ENCODE measurements at regions of chr10 and their contacts with region 1.

Region 1: GRCh38 chr10:103231047-103231551 is 14.6 kb upstream of the RPEL1 start:
- DNase-seq: peak; percentile 48 to 68
- ATAC-seq: peak; percentile 59 to 78
- H3K4me3 ChIP-seq: no peak overlapping the region
- H3K27ac ChIP-seq: peak overlapping the region; percentile 86 to 95 (median 87)
- H3K4me1 ChIP-seq: peaks cover 28 to 42% of the 10 kb centered on the region in 2 donors
- H3K27me3 ChIP-seq: no peaks in the 10 kb centered on the region
- CTCF ChIP-seq: no peak
- POLR2A ChIP-seq: no peak

Region 2: DNA sequence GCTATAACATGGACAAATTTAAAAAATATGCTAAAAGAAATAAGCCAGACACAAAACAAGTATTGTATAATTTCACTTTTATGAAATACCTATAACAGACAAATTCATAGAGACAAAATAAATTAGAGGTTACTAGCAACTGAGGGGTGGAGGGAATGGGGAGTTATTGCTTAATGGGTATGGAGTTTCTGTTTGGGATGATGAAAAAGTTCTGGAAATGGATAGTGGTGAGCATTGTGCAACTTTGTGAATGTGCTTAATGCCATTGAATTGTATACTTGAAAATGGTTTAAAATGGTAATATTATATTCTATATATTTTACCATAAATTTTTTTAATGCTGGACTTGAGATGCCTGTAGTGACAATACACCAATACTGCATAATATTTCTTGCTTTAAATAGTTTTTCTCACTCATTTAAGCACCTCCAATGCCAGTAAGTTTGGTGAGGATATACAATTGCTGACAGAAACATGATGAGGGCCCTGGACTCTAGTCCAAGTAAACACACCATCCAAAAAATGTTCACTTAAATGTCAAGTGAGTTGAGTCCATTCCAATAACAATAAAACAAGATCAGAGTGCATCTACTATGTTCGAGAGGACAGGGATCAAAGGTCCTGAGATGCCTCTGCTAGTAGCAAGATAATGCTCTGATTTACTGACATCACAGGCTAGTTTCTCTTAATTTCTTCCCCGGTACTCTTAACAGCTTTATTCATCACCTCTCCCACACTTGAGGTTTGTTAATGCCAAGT is 109.9 kb before region 1 on chr10:
- in situ Hi-C with region 1: loop called in 1 of 4 experiments (anchors 25 kb)
- intact Hi-C with region 1: loop called (anchors 2 kb)
- DNase-seq: peak in 1 of 2 donors; percentile 42
- ATAC-seq: peak; percentile 85 to 87
- H3K4me3 ChIP-seq: peak overlapping the region in 1 of 4 donors; percentile 8
- H3K27ac ChIP-seq: peak overlapping the region; percentile 79 to 92 (median 86)
- H3K4me1 ChIP-seq: peaks cover 92 to 97% of the 10 kb centered on the region in 2 donors
- H3K27me3 ChIP-seq: no peaks in the 10 kb centered on the region
- CTCF ChIP-seq: no peak
- POLR2A ChIP-seq: no peak

Region 3: GRCh38 chr10:103145860-103146466 is 85.1 kb before region 1 on chr10:
- in situ Hi-C with region 1: no loop called
- intact Hi-C with region 1: loop called (anchors 1 kb)
- DNase-seq: peak; percentile 84 to 86
- ATAC-seq: peak; percentile 76 to 78
- H3K4me3 ChIP-seq: peak overlapping the region; percentile 35 to 48 (median 44)
- H3K27ac ChIP-seq: peak overlapping the region; percentile 74 to 93 (median 88)
- H3K4me1 ChIP-seq: peaks cover 47 to 85% of the 10 kb centered on the region in 2 donors
- H3K27me3 ChIP-seq: no peaks in the 10 kb centered on the region
- CTCF ChIP-seq: no peak
- POLR2A ChIP-seq: peak; percentile 8 to 69

Region 4: DNA sequence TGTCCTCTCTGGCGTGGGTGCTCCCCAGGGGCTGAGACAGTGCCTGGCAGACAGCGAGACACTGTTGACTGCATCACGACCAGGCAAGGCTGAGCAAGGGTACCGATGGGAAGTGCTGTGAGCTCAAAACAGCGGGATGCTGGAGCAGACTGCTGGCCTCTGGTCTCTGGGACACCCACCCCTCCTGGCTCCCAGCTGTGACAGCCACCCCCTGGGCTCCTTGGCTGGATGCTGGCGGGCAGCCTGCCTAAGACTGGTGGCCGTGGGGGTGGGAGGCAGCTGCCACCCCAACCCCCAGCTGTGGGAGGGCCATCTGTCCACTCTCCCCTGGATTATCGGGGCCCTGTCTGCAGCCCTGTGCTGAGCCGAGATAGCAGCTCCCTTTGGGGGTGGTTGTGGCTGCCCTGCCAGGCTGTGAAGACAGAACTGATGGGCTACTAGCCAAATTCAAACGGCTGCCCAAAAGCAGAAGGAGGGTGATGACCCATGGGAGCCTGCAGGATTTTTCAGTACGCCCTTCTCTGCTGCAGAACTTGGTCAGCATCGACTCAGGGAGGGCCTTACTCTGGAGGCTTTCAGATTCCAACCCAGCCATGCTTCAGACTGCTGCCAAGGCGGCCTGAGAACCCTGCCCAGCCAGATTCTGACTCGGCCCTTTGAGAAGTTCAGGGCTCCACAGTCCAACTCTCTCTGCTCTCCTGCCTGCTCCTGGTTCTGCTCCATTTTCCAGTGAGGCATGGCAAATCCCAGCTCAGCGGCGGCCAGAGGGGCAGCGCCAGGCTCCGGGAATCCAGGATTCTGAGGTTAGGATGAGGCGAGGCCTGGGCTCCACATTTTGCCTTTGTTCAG is 387.7 kb after region 1 on chr10:
- in situ Hi-C with region 1: no loop called
- intact Hi-C with region 1: no loop called
- DNase-seq: peak; percentile 39 to 67
- ATAC-seq: peak; percentile 15 to 29
- H3K4me3 ChIP-seq: no peak overlapping the region
- H3K27ac ChIP-seq: peak overlapping the region in 2 of 4 donors; percentile 29 to 45
- H3K4me1 ChIP-seq: peaks cover 69 to 75% of the 10 kb centered on the region in 2 donors
- H3K27me3 ChIP-seq: no peaks in the 10 kb centered on the region
- CTCF ChIP-seq: no peak
- POLR2A ChIP-seq: no peak

Measured in gastrocnemius medialis (tissue), 4 donors.